HEK293 (cell line): ENCODE measurements at regions of chr6 and their contacts with region 1.

Region 1: DNA sequence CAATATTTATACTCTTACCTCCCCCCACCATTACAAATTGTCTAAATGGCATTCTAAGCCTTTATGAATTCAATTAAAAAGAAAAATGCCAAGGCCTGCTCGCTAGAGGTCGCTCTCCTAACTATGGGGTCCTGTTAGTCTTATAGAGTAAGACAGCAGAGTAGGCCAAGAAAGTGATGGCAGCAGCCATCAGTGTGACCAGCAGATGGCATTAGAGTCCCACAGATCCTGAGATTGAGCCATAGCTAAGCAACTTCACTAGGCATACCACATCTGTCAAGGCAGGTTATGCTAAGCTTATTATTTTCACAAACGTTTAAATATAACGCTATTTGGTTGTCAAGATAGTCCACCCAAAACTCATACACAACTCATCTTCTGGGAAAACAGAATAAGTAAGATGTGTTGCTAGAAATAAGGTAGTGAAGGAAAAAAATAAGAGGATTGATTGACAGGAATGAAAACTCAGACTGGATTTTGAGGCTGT is 57.6 kb upstream of the SCAF8 start:
- H3K4me3 ChIP-seq: no peak overlapping the region
- H3K27ac ChIP-seq: no peak overlapping the region
- H3K4me1 ChIP-seq: no peaks in the 10 kb centered on the region
- CTCF ChIP-seq: peak; percentile 95

Region 2: DNA sequence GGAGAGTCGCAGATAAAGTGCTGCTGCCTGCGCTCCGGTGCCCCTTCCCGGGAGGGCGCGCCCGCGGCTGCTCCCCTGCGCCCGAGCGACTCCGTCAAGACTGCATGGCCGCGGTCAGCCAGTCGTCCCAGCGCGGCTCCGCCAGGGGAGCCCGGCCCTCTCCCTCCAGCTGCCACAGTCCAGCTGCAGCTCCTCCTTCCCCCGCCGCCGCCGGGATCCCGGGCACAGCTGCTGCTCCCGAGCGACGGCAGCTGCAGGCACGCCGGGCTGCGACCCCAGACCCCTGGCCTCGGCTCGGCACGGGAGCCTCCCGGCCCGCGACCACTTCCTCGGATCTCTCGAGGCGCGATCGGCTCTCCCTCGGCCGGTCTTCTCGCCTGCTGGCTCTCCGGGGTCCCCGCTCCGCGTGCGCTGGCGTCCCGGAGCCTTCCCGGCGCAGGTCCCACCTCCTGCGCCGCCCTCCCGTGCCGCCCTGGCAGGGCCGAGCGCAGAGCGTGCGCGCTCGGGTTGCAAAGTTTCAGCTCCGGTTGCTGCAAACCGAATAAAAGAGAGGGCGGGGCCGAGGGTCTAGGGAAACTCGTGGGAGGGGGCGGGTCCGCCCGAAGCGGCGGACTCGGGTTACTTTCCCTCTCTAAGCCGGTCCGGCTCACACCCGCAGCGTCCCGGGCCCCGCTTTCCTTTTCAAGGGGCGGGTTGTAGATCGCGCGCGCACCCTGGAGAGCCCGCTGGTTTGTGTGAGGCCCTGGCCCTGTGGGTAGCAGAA is 165.3 kb before region 1 on chr6 and contains the start of gene CNKSR3:
- CTCF ChIA-PET with region 1: interaction called, 18 read pairs
- POLR2A ChIA-PET with region 1: no interaction called
- H3K4me3 ChIP-seq: peak within 1 kb of the TSS; percentile 90
- H3K27ac ChIP-seq: peak within 1 kb of the TSS; percentile 94
- H3K4me1 ChIP-seq: peaks cover 4% of the 10 kb centered on the region; the same call in 1 of the 2 replicates
- CTCF ChIP-seq: 0 out of 2 replicates have a peak, but pooled peaks have one; percentile 60

Region 3: DNA sequence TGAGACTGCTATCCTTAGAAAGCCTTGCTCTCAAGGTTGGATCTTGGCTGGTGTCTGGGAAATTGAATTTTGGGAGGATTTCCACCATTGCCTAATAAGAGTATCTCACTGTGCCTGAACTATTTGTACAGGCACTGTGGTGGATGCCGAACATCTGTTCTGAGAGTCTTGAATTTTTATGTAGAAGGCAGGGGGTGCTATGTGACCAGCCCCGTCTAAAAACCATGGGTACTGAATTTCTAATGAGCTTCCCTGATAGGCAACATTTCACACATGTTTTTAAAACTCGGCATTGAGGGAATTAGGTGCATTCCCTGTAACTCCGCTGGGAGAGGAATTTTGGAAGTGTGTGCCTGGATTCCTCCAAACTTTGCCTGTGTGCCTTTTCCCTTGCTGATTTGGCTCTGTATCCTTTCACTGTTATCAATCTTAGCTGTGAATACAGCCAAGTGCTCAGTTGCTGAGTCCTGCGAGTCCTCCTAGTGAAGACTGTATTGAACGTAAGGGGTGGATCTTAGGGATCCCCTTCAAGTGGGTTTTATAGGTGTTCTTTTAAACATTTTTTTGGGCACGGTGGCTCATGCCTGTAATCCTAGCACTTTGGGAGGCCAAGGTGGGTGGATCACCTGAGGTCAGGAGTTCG is 29.9 kb after region 1 on chr6:
- CTCF ChIA-PET with region 1: interaction called, 11 read pairs
- POLR2A ChIA-PET with region 1: no interaction called
- H3K4me3 ChIP-seq: no peak overlapping the region
- H3K27ac ChIP-seq: no peak overlapping the region
- H3K4me1 ChIP-seq: no peaks in the 10 kb centered on the region
- CTCF ChIP-seq: no peak

Region 4: DNA sequence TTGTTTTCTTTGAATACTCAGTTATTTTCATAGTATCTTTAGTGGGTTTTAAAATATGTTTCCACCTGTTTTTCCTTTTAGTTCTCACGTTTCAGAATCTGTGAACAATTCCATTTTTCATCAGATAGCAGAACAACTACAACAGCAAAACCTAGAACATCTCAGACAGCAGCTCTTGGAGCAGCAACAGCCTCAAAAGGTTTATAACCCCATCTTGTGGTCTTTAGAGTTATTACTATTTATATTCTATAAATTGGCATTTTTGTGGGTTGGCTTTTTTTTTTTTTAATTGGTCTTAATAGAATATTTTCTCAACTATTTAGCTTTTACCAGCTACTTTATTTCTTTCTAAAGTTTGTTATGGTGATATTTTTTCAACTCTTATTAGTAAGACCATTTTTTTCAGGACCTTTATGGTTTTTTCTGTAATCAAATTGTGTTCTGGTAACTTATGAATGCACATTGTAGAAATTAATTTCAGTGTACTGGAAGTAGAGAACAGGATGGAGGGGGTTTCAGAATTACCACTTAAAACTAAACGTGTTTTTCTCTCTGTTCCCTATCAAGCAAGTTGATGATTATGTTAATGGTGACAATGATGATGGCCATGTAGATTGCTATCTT is 129.8 kb after region 1 on chr6:
- CTCF ChIA-PET with region 1: interaction called, 125 read pairs
- POLR2A ChIA-PET with region 1: no interaction called
- H3K4me3 ChIP-seq: no peak overlapping the region
- H3K27ac ChIP-seq: no peak overlapping the region
- H3K4me1 ChIP-seq: no peaks in the 10 kb centered on the region
- CTCF ChIP-seq: 0 out of 2 replicates have a peak, but pooled peaks have one; percentile 22

Region 5: DNA sequence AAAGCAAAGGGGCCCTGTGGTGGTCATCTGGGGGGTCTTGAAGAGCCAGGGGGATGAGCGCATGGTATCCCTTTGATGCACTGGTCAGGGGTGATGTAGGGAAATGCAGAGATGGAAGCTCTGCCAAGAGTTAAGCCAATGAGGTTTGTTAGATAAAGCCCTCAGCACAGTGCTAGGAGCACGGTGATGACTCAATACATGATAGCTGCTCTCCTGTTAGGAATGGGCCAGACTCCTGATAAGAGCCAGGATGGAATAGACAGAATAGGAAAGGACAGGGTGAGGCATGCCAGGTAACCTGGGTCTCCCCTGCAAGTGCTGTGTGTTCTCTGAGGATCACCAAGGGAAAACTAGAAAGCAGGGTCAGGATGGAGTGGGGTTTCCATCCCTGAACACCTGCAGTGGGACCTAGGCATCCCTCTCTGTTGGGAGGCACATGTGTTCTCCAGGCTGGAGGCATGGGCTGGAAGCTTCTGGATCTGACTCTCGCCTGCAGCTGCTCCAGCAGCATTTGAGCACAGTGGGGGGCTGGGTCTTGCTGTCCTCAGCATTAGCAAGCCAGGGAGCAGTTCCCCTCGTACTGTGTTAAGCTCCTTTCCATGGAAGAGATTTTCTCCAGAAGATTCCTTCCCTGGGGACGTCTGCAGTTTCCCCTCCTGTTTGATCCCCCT is 247.7 kb after region 1 on chr6:
- CTCF ChIA-PET with region 1: interaction called, 36 read pairs
- POLR2A ChIA-PET with region 1: no interaction called
- H3K4me3 ChIP-seq: no peak overlapping the region
- H3K27ac ChIP-seq: no peak overlapping the region
- H3K4me1 ChIP-seq: no peaks in the 10 kb centered on the region
- CTCF ChIP-seq: no peak